SK-N-SH (cell line): ENCODE measurements at regions of chr15 and their contacts with region 1.

Region 1: GRCh38 chr15:51401872-51402517 is 60.5 kb downstream of the GLDN start:
- DNase-seq: peak; percentile 39
- H3K4me3 ChIP-seq: no peak overlapping the region
- H3K27ac ChIP-seq: no peak overlapping the region
- H3K4me1 ChIP-seq: no peaks in the 10 kb centered on the region
- H3K27me3 ChIP-seq: peaks cover 11% of the 10 kb centered on the region
- CTCF ChIP-seq: peak; percentile 58
- EP300 ChIP-seq: no peak
- RAD21 ChIP-seq: peak; percentile 54

Region 2: GRCh38 chr15:51227940-51228783 is 173.8 kb before region 1 on chr15:
- CTCF ChIA-PET with region 1: interaction called, 40 read pairs
- POLR2A ChIA-PET with region 1: no interaction called
- DNase-seq: no peak
- H3K4me3 ChIP-seq: no peak overlapping the region
- H3K27ac ChIP-seq: peak overlapping the region in 1 of 2 experiments; percentile 56; a peak in 2 of 4 replicates
- H3K4me1 ChIP-seq: peaks cover 3 to 11% of the 10 kb centered on the region in 2 experiments; a peak in 2 of 4 replicates
- H3K27me3 ChIP-seq: no peaks in the 10 kb centered on the region
- CTCF ChIP-seq: no peak
- EP300 ChIP-seq: no peak
- RAD21 ChIP-seq: no peak

Region 3: DNA sequence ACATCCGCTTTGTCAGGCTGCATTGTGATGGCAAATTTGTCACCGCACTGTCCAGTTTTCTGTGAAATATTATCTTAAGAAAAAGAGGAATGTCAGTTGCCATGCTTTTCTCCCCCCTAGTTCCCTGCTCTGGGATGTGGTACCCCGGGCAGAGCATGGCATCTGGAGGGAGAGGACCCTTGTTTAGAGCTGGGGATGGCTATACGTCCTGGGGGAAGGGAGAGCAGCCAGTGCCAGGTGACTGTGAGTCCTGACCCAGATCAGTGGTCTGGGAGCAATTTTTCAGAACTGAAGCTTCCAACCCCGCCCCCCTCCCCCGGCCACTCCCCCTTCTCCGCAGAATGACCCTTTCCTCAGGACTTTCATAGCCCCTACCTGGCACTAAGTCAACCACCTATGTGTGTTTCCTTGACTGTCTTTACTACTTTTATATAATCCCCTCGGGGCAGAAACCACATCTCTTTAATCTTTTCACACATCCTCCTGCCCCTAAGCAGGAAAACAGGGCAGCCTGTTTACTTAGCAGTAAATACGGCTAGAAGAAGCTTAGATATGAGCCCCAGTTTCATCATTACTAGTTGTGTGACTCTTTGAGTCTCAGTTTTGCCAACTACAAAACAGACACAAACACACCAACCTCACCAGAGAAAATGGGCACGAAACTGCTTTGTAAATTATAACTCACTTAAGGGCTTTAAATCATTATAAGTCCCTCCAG is 162.1 kb before region 1 on chr15:
- CTCF ChIA-PET with region 1: interaction called, 10 read pairs
- POLR2A ChIA-PET with region 1: no interaction called
- DNase-seq: peak; percentile 27
- H3K4me3 ChIP-seq: no peak overlapping the region
- H3K27ac ChIP-seq: no peak overlapping the region
- H3K4me1 ChIP-seq: peaks cover 0 to 3% of the 10 kb centered on the region in 2 experiments; a peak in 2 of 4 replicates
- H3K27me3 ChIP-seq: peaks cover 5% of the 10 kb centered on the region; the same call in 1 of the 2 replicates
- CTCF ChIP-seq: no peak
- EP300 ChIP-seq: no peak
- RAD21 ChIP-seq: no peak

Region 4: DNA sequence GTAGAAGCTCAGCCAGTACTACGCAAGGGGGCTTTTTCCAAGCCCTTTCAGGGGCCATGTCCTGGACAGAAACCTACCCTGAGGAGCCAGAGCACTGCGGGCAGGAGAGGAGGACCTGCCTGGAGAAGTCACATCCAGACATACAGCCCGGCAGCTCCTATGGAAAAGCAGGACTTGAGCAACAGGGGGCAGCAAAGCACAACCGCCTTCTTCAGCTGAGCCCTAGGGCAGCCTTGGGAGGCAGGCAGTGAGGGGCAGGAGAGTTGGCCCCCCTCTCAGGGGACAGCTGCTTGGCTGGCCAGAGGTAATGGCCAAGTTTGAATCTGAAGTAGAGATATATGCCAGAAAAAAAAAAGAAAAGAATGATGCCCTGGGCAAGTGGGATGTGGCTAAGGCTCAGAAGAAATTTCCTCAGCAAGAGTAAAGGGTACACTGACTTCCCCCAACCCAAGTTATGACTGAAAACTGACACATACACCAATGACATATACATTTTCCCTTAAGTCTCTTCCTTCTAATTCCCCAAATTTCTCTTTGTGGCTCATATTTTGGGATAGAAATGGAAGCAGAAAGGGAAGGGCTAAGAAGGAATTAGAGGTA is 120.5 kb before region 1 on chr15:
- CTCF ChIA-PET with region 1: interaction called, 14 read pairs
- POLR2A ChIA-PET with region 1: no interaction called
- DNase-seq: peak; percentile 60
- H3K4me3 ChIP-seq: no peak overlapping the region; a peak in 1 of 4 replicates
- H3K27ac ChIP-seq: no peak overlapping the region
- H3K4me1 ChIP-seq: peaks cover 0 to 8% of the 10 kb centered on the region in 2 experiments; a peak in 1 of 4 replicates
- H3K27me3 ChIP-seq: peaks cover 21% of the 10 kb centered on the region; the same call in 1 of the 2 replicates
- CTCF ChIP-seq: peak; percentile 52
- EP300 ChIP-seq: no peak
- RAD21 ChIP-seq: peak; percentile 70

Region 5: DNA sequence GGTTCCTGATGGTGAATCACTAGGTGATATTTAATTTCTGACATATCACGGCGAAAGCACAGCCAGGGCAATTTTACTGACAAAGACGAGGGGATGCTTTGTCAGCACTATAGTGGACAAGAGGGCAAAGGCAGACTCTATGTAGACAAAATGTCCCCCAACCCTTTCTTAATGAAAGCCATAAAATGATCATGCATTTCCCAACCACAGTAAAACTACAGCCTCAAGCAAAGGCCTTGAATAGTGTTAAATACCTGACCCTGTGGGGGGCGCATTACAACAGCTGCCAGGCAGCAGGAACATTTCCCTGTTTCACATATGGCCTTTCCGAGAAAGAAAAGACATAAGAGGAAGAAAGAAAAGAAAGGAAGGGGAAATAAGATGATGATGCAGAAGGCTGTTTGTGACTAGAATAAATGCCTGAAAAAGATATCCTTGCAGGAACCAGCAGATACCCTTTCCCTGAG is 11.0 kb before region 1 on chr15:
- CTCF ChIA-PET with region 1: interaction called, 38 read pairs
- POLR2A ChIA-PET with region 1: no interaction called
- DNase-seq: no peak
- H3K4me3 ChIP-seq: no peak overlapping the region
- H3K27ac ChIP-seq: no peak overlapping the region
- H3K4me1 ChIP-seq: peaks cover 0 to 6% of the 10 kb centered on the region in 2 experiments; a peak in 1 of 4 replicates
- H3K27me3 ChIP-seq: no peaks in the 10 kb centered on the region; the same call in 1 of the 2 replicates
- CTCF ChIP-seq: no peak
- EP300 ChIP-seq: no peak
- RAD21 ChIP-seq: no peak

Region 6: GRCh38 chr15:51585986-51586385 is 184.0 kb after region 1 on chr15:
- CTCF ChIA-PET with region 1: no interaction called
- POLR2A ChIA-PET with region 1: no interaction called
- DNase-seq: no peak
- H3K4me3 ChIP-seq: no peak overlapping the region
- H3K27ac ChIP-seq: no peak overlapping the region
- H3K4me1 ChIP-seq: no peaks in the 10 kb centered on the region
- H3K27me3 ChIP-seq: no peaks in the 10 kb centered on the region
- CTCF ChIP-seq: no peak
- EP300 ChIP-seq: no peak
- RAD21 ChIP-seq: no peak

Region 7: GRCh38 chr15:51971375-51972133 is 569.6 kb after region 1 on chr15 and contains the start of gene LEO1:
- CTCF ChIA-PET with region 1: no interaction called
- POLR2A ChIA-PET with region 1: no interaction called
- DNase-seq: peak; percentile 89
- H3K4me3 ChIP-seq: peak within 1 kb of the TSS; percentile 74 to 95
- H3K27ac ChIP-seq: peak within 1 kb of the TSS; percentile 94 to 95
- H3K4me1 ChIP-seq: peaks cover 0 to 5% of the 10 kb centered on the region in 2 experiments; a peak in 2 of 4 replicates
- H3K27me3 ChIP-seq: no peaks in the 10 kb centered on the region
- CTCF ChIP-seq: peak; percentile 58
- EP300 ChIP-seq: no peak; a peak in 1 of 4 replicates
- RAD21 ChIP-seq: no peak
- polyA plus RNA-seq, gene LEO1: 6.7 and 7.0 TPM in 2 replicates